Transverse colon (tissue), 4 donors: ENCODE measurements at regions of chr7 and their contacts with region 1.

Region 1: DNA sequence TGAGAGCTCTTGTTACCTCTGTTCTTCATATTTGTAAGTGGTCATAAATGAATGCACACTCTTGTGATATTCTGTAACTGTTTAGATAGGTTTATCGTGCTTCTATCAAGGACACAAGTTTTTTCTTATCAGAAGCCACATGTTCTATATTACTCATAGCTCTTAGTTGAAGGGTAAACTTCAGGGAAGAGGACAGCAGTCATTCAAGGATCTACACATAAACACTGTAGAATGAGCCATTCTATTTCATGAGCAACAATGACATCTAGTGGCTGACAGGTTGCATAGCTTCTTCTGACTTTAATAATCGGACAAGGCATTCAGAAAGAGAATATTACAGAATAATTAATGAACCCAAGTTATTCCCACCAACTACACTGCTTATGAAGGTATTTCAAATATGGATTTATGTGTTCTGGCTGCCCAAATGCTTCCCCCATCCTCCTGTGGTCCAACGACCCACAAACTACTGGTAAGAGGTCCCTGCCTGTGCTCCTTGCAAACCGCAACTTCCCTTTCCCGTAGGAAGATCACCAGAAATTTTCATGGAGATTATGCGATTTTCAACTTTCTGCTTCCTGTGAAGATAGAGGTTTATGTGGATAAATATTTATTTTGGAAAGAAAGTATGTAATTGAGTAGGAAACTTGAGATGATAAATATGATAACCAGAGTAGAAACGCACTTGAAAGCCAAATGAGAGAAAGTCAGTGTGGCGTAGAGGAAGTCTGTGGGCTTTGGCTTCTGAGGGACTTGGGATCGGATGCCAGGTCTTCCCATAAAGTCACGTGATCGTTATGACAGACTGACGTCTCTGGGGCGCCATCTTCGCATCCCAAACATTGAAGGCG is 16.8 kb upstream of the ABCB5 start:
- DNase-seq: no peak
- H3K4me3 ChIP-seq: no peak overlapping the region
- H3K27ac ChIP-seq: no peak overlapping the region
- H3K4me1 ChIP-seq: no peaks in the 10 kb centered on the region
- H3K27me3 ChIP-seq: peaks cover 7% of the 10 kb centered on the region
- CTCF ChIP-seq: peak; percentile 75 to 81 (median 77)
- EP300 ChIP-seq: no peak
- POLR2A ChIP-seq: no peak

Region 2: DNA sequence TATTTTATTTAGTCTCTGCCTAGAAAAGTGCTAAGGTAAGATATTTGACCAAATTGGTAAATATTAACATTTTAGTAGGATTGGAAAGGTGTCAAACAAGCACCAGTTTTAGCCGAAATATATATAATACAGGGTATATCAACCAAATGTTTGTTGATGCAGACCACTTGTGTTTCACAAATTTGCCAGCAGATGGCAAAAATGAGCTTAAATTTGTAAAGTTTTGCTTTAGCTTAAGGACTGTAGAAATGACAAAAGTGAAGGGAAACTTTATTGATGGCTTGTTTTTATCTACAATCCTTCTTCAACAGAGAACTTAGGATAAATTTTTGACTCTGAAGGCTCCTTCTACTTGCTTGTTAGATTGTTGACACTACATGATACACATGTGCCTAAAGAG is 885.0 kb before region 1 on chr7:
- in situ Hi-C with region 1: no loop called
- intact Hi-C with region 1: loop called (anchors 10 kb)
- DNase-seq: peak; percentile 12
- H3K4me3 ChIP-seq: no peak overlapping the region
- H3K27ac ChIP-seq: no peak overlapping the region
- H3K4me1 ChIP-seq: no peaks in the 10 kb centered on the region
- H3K27me3 ChIP-seq: no peaks in the 10 kb centered on the region
- CTCF ChIP-seq: peak; percentile 35 to 56 (median 41)
- EP300 ChIP-seq: no peak
- POLR2A ChIP-seq: no peak

Region 3: DNA sequence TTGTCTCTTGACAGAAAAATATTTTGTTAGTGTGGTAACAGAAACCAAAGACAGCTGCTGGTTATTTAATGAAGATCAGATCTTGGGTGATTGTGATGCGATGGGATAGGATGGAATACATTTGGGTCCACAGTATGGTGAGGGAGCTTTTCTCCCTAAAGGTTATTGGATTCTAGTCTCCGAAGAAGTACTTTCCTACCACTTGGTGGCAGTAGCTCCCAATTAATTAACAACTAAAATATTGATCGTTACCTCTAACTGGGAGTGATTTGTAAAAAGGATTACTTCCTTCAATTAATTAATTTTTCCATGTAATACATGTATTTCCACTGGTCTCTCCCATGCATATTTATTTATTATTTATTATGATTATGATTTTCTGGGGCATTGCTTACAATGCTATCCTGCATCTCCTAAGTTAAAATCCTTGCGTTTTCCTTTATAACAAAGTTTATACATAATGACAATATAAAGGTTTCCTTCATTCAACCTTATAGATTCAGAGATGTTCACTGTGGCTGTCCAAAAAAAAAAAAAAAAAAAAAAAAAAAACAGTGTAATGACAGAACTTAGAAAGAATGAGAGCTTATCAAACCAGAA is 850.8 kb before region 1 on chr7:
- in situ Hi-C with region 1: loop called (anchors 5 to 25 kb)
- intact Hi-C with region 1: no loop called
- DNase-seq: no peak
- H3K4me3 ChIP-seq: no peak overlapping the region
- H3K27ac ChIP-seq: no peak overlapping the region
- H3K4me1 ChIP-seq: no peaks in the 10 kb centered on the region
- H3K27me3 ChIP-seq: no peaks in the 10 kb centered on the region
- CTCF ChIP-seq: peak; percentile 36 to 50 (median 47)
- EP300 ChIP-seq: no peak
- POLR2A ChIP-seq: no peak

Region 4: DNA sequence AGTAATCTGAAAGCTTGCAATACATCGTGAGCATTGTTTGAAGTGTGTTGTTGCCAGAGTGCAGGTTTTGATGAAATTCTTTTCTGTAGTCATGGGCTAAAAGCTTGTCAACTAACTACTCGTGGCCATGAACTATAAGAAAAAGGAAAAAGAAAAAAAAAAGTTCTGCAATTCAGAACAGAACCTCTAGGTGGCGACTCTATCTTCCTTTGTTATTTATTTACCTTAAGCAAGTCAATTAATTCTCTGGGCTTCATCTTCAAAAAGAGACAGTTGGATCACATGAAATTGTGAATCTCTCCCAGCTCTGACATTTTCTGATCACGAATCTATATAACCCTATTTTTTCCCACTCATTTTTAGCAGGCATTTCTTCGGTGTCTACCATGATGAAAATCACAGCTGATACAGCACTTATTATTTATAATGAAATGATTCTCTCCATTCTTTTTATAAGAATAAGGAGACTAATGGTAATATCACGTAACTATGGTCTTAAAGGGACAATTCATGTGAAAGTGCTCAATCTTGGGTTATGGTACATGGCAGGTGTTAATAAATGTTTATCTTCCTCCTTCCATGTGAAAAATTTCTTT is 844.1 kb before region 1 on chr7:
- in situ Hi-C with region 1: loop called (anchors 5 to 25 kb)
- intact Hi-C with region 1: no loop called
- DNase-seq: no peak
- H3K4me3 ChIP-seq: no peak overlapping the region
- H3K27ac ChIP-seq: no peak overlapping the region
- H3K4me1 ChIP-seq: no peaks in the 10 kb centered on the region
- H3K27me3 ChIP-seq: no peaks in the 10 kb centered on the region
- CTCF ChIP-seq: peak; percentile 58 to 82 (median 68)
- EP300 ChIP-seq: no peak
- POLR2A ChIP-seq: no peak

Region 5: DNA sequence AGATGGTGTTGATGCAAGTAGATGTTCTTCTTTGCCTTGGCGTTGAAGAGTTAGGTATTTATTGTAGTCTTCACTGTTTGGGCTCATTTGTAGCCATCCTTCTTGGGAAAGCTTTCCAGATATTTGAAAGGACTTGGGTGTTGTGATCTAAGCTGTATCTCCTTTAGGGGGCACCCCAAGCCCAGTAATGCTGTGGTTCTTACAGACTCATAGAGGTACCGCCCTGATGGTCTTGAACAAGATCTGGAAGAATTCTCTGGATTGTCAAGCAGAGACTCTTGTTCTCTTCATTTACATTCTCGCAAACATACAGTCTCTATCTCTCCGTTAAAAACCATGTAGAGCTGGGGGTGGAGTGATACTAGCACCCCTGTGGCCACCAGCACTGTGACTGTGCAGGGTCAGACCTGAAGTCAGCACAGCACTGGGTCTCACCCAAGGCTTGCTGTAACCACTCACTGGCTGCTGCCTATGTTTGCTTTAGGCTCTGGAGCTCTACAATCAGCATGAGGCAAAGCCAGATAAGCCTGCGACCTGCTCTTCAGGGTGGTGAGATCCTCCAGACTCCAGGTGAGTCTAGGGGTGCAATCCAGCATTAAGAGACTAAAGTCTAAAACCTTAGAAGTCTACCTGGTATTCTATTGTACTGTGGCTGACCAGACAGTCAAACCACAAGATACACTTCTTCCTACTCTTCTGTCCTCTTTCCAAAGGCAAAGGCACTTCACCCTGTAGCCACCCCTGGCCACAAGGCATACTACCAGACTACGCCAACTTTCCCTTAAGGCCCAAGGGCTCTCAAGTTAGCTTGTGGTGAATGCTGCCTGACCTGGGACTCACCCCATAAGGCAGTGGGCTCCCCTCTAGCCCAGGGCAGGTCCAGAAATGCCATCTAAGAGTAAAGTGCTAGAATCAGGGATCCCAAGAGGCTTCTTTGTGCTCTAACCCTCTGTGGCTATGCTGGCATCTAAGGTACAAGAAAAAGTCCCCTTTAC is 615.5 kb before region 1 on chr7:
- in situ Hi-C with region 1: loop called in 1 of 4 experiments (anchors 25 kb)
- intact Hi-C with region 1: no loop called
- DNase-seq: peak; percentile 46
- H3K4me3 ChIP-seq: no peak overlapping the region
- H3K27ac ChIP-seq: no peak overlapping the region
- H3K4me1 ChIP-seq: no peaks in the 10 kb centered on the region
- H3K27me3 ChIP-seq: no peaks in the 10 kb centered on the region
- CTCF ChIP-seq: peak; percentile 26 to 36 (median 28)
- EP300 ChIP-seq: no peak
- POLR2A ChIP-seq: no peak

Region 6: GRCh38 chr7:20172736-20173334 is 425.8 kb before region 1 on chr7:
- in situ Hi-C with region 1: loop called in 1 of 4 experiments (anchors 25 kb)
- intact Hi-C with region 1: no loop called
- DNase-seq: peak; percentile 62
- H3K4me3 ChIP-seq: no peak overlapping the region
- H3K27ac ChIP-seq: no peak overlapping the region
- H3K4me1 ChIP-seq: peaks cover 0 to 8% (median 2%) of the 10 kb centered on the region in 4 donors
- H3K27me3 ChIP-seq: no peaks in the 10 kb centered on the region
- CTCF ChIP-seq: peak; percentile 35 to 56 (median 43)
- EP300 ChIP-seq: no peak
- POLR2A ChIP-seq: no peak